Activated T-helper 1 cell treated with anti-CD3 and anti-CD28 coated beads, Interleukin-12 subunit alpha, Interleukin-12 subunit beta, Interleukin-2, Interleukin-4 antibody, amounts not matched to agents 30 ng/mL and 10 ng/mL and 1 ng/mL, durations not matched to agents 14 hours and 24 hours and 36 hours (primary cell): ENCODE measurements at regions of chr2 and their contacts with region 1.

Region 1: GRCh38 chr2:223993621-223994232 is 36.5 kb downstream of the MRPL44 start:
- DNase-seq: peak; percentile 46
- H3K4me3 Mint-ChIP-seq: no peak overlapping the region
- H3K27ac Mint-ChIP-seq: no peak overlapping the region
- H3K4me1 Mint-ChIP-seq: peaks cover 18% of the 10 kb centered on the region
- H3K27me3 Mint-ChIP-seq: no peaks in the 10 kb centered on the region

Region 2: DNA sequence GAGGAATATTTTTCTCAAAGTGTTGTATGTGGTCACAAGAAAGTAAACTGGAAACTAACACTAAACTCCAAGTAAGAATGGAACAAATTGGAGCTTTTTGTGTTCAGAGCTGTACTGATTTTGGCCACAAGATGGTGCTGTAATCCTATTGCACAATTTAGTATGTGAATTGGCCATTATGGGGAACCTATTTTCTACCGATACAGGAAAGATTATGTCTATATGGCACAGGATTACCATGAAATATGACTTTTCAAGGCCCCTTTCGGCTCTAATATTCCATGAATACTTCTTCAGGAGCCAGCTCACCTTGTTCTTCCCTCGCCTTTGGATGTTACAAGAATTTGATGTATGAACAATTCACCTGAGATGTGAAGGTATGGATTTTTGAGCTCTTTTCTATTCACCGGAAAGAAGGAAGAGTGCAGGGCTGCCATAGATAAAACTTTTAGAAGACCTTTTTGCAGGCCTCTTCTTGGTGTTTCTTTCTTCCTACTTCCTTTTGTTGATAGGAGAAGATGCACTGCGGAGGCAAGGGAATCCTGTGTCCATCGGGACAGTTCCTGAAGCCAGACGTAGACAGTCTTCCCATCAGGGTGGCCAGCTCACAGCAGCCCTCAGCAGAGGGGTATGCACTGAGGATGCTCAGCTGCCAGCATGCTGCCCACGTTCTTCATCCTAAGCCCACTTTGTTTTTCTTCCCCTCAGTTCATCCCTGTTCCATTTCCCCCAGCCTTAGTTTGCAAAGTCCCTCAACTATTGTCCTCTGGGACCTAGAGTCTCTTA is 23.2 kb before region 1 on chr2:
- intact Hi-C with region 1: loop called (anchors 1 kb)
- DNase-seq: peak; percentile 41
- H3K4me3 Mint-ChIP-seq: no peak overlapping the region
- H3K27ac Mint-ChIP-seq: no peak overlapping the region
- H3K4me1 Mint-ChIP-seq: peaks cover 8% of the 10 kb centered on the region
- H3K27me3 Mint-ChIP-seq: no peaks in the 10 kb centered on the region

Region 3: DNA sequence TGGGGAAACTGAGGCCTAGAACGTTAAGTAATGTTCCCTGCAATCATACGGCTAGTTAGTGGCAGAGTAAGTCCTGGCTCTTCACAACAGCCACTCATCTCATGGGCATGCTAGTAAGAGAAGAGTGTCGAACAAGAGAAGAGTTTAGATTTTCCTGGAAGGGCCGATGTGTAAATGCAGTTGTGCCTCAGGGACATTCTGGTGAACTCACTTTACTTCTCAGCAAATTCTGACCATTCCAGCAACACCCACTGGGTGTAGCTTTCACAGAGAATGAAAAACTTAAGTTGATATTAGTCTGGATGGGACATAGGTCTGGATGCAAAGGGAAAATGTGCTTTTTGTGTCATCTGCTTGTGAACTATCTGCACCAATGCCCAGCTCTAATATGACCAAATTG is 12.9 kb before region 1 on chr2:
- intact Hi-C with region 1: no loop called
- DNase-seq: no peak
- H3K4me3 Mint-ChIP-seq: no peak overlapping the region
- H3K27ac Mint-ChIP-seq: no peak overlapping the region
- H3K4me1 Mint-ChIP-seq: peaks cover 4% of the 10 kb centered on the region
- H3K27me3 Mint-ChIP-seq: no peaks in the 10 kb centered on the region

Region 4: DNA sequence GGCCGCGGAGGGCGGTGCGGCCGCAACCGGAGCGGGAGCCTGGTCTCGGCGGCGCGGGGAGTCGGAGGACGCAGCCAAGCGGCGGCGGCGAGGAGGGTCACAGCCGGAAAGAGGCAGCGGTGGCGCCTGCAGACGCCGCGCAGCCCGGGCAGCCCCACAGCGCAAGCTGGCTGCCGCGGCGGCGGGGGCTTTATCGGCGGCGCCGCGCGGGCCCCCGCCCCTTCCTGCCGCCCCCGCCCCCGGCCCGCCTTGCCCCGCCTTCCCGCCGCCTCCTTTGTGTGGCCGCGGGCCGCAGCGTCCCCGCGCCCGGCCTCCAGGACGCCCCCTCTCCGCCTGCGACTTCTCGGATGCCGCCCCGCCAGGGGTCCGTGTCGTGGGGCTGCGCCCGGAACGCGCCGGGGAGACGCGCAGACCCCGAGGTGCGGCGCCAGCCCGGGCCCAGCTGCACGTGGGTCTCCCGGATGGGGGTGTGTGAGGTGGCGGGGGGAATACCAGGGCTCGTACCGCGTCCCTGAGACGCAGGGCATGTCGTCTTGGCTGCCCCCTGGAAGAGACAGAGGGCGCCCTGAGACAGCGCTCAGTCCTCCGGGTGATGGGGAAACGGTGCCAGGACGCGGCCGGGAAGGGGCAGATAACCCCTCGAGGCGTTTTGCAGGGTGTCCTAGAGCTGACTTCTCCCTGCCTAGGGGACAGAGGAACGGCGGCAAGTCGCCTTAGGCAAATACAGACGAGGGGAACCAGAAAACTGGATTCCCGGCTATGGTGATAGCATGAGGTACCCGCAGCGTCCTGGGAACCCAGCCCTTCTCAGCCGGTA is 45.6 kb after region 1 on chr2 and contains the start of gene SERPINE2:
- intact Hi-C with region 1: loop called (anchors 1 kb)
- DNase-seq: peak; percentile 46
- H3K4me3 Mint-ChIP-seq: peak within 1 kb of the TSS; percentile 97
- H3K27ac Mint-ChIP-seq: peak within 1 kb of the TSS; percentile 82
- H3K4me1 Mint-ChIP-seq: peaks cover 25% of the 10 kb centered on the region
- H3K27me3 Mint-ChIP-seq: peaks cover 38% of the 10 kb centered on the region
- total RNA-seq, gene SERPINE2: 28.8 and 29.7 TPM in 2 replicates

Region 5: DNA sequence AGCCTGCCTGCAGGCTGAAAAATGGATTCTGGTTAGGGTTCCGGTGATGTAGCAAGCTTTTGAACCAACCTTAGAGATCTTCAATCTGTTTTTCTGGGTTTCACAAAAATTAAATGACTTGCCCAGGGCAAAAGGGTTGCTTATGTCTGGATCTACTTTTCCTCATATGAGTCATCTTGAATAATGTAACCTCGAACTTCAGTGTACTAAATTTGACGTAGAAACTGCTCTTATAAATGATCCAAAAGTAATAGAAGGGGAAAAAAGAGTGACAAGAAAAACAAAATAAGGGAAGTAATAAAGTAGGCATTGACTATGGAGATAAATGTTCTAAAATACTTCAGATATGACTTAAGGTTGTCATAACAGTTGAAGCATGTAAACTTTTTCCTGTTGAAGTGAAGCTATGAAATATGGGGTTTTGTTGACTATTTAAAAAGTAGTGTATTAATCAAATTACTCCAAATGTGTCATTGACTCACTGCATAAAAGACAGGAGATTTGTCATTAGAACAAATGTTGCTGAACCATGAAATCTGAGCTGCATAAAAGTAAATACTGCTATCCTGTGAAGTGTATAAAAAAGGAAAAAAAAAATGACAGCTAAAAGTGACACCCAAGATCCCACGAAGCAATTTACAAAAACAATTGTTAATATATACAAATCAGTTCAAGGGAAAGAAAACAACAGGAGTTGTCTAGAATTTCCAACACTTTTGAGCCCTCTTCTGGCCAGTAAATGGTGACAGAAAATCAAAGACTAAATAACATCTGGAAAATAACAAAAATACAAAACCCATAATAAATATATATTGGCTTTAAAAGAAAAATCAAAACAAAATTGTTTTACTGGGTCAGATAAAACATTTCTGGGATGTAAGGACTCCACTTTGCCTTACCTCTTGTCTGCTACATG is 148.9 kb after region 1 on chr2:
- intact Hi-C with region 1: loop called (anchors 5 kb)
- DNase-seq: no peak
- H3K4me3 Mint-ChIP-seq: no peak overlapping the region
- H3K27ac Mint-ChIP-seq: no peak overlapping the region
- H3K4me1 Mint-ChIP-seq: no peaks in the 10 kb centered on the region
- H3K27me3 Mint-ChIP-seq: peaks cover 18% of the 10 kb centered on the region

Region 6: GRCh38 chr2:224284134-224284946 is 290.6 kb after region 1 on chr2:
- intact Hi-C with region 1: loop called (anchors 1 kb)
- DNase-seq: no peak
- H3K4me3 Mint-ChIP-seq: no peak overlapping the region
- H3K27ac Mint-ChIP-seq: no peak overlapping the region
- H3K4me1 Mint-ChIP-seq: no peaks in the 10 kb centered on the region
- H3K27me3 Mint-ChIP-seq: peaks cover 21% of the 10 kb centered on the region